ENCODE measurements at regions of chr2 and their contacts with region 1.

Region 1: GRCh38 chr2:85865539-85866164 is 23.1 kb downstream of the ST3GAL5 start:
- DNase-seq: peak; percentile 62
- ATAC-seq: peak; percentile 90
- H3K4me3 ChIP-seq: no peak overlapping the region; the same call in 1 of the 2 replicates
- H3K27ac ChIP-seq: no peak overlapping the region
- H3K4me1 ChIP-seq: peaks cover 24% of the 10 kb centered on the region
- H3K27me3 ChIP-seq: no peaks in the 10 kb centered on the region
- CTCF ChIP-seq: no peak
- EP300 ChIP-seq: peak in 1 of 2 experiments; percentile 58; a peak in 1 of 4 replicates
- POLR2A ChIP-seq: no peak
- RAD21 ChIP-seq: peak; percentile 7; the same call in 1 of the 2 replicates

Region 2: GRCh38 chr2:85852937-85853498 is 12.6 kb before region 1 on chr2:
- CTCF ChIA-PET with region 1: interaction called, 4 read pairs
- POLR2A ChIA-PET with region 1: interaction called, 6 read pairs
- RAD21 ChIA-PET with region 1: interaction called, 41 read pairs
- SMC1A ChIA-PET with region 1: interaction called, 71 read pairs
- in situ Hi-C with region 1: no loop called
- intact Hi-C with region 1: no loop called
- DNase-seq: peak; percentile 88
- ATAC-seq: peak; percentile 84
- H3K4me3 ChIP-seq: peak overlapping the region; percentile 51; the same call in 1 of the 2 replicates
- H3K27ac ChIP-seq: peak overlapping the region; percentile 84
- H3K4me1 ChIP-seq: peaks cover 49% of the 10 kb centered on the region
- H3K27me3 ChIP-seq: no peaks in the 10 kb centered on the region
- CTCF ChIP-seq: no peak
- EP300 ChIP-seq: peak; percentile 5 to 51; a peak in 1 of 4 replicates
- POLR2A ChIP-seq: peak; percentile 57; the same call in 1 of the 2 replicates
- RAD21 ChIP-seq: no peak

Region 3: GRCh38 chr2:85878719-85879385 is 13.2 kb after region 1 on chr2:
- CTCF ChIA-PET with region 1: interaction called, 10 read pairs
- POLR2A ChIA-PET with region 1: interaction called, 34 read pairs
- RAD21 ChIA-PET with region 1: interaction called, 5 read pairs
- SMC1A ChIA-PET with region 1: interaction called, 112 read pairs
- in situ Hi-C with region 1: no loop called
- intact Hi-C with region 1: no loop called
- DNase-seq: no peak
- ATAC-seq: peak; percentile 34; the same call in 2 of the 3 replicates
- H3K4me3 ChIP-seq: no peak overlapping the region
- H3K27ac ChIP-seq: no peak overlapping the region
- H3K4me1 ChIP-seq: no peaks in the 10 kb centered on the region
- H3K27me3 ChIP-seq: peaks cover 0 to 4% of the 10 kb centered on the region in 2 experiments; a peak in 1 of 4 replicates
- CTCF ChIP-seq: no peak
- EP300 ChIP-seq: no peak
- POLR2A ChIP-seq: no peak
- RAD21 ChIP-seq: no peak

Region 4: GRCh38 chr2:86160156-86160952 is 294.7 kb after region 1 on chr2:
- CTCF ChIA-PET with region 1: no interaction called
- POLR2A ChIA-PET with region 1: no interaction called
- RAD21 ChIA-PET with region 1: no interaction called
- SMC1A ChIA-PET with region 1: no interaction called
- in situ Hi-C with region 1: no loop called
- intact Hi-C with region 1: no loop called
- DNase-seq: no peak
- ATAC-seq: no peak
- H3K4me3 ChIP-seq: no peak overlapping the region
- H3K27ac ChIP-seq: no peak overlapping the region
- H3K4me1 ChIP-seq: no peaks in the 10 kb centered on the region
- H3K27me3 ChIP-seq: no peaks in the 10 kb centered on the region
- CTCF ChIP-seq: no peak
- EP300 ChIP-seq: no peak
- POLR2A ChIP-seq: no peak
- RAD21 ChIP-seq: no peak